B cell (primary cell): ENCODE measurements at regions of chr5 and their contacts with region 1.

Region 1: GRCh38 chr5:139690064-139690802 is 42.1 kb downstream of the CXXC5 start:
- DNase-seq: peak; percentile 71
- ATAC-seq: peak; percentile 51
- H3K4me3 ChIP-seq: peak overlapping the region in 2 of 5 experiments; percentile 8 to 9
- H3K4me3 Mint-ChIP-seq: peak overlapping the region; percentile 41
- H3K27ac ChIP-seq: peak overlapping the region; percentile 28 to 47
- H3K27ac Mint-ChIP-seq: peak overlapping the region; percentile 78
- H3K4me1 ChIP-seq: peaks cover 47 to 56% of the 10 kb centered on the region in 2 donors
- H3K4me1 Mint-ChIP-seq: peaks cover 52% of the 10 kb centered on the region
- H3K27me3 ChIP-seq: no peaks in the 10 kb centered on the region
- H3K27me3 Mint-ChIP-seq: no peaks in the 10 kb centered on the region
- CTCF ChIP-seq: peak; percentile 70

Region 2: DNA sequence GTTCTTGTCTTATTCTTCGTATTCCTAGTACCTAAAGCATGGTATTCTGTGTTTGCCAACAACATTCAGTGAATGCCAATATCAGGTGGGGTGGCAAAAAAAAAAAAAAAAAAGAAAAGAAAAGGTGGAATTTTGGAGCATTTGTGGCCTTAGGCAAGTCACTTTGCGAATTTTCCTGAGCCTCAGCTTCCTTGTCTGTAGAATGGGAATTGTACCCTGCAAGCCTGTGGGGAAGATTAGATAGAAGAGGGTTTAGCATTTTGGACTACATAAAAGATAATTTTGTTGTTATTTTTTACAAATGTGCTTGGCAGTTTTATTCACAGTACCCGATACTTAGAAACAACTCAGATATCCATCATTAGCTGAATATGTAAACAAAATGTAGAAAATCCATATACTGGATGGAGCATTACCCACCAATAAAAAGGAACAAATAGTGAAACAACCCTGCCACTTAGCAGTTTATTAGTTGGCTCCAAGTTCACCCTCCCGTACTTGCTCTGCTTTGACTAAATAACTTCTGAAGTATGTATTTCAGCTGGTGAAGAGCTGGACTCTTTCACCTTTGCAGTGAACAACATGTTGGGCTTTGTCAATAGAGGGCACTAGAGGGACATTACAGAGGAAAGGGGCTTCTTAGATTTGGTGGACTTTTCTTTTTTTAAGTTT is 115.5 kb before region 1 on chr5:
- CTCF ChIA-PET with region 1: interaction called, 10 read pairs
- POLR2A ChIA-PET with region 1: no interaction called
- intact Hi-C with region 1: no loop called
- DNase-seq: peak; percentile 63
- ATAC-seq: peak; percentile 67
- H3K4me3 ChIP-seq: no peak overlapping the region
- H3K4me3 Mint-ChIP-seq: peak overlapping the region; percentile 2
- H3K27ac ChIP-seq: peak overlapping the region in 1 of 2 donors; percentile 66
- H3K27ac Mint-ChIP-seq: peak overlapping the region; percentile 5
- H3K4me1 ChIP-seq: peaks cover 71 to 76% of the 10 kb centered on the region in 2 donors
- H3K4me1 Mint-ChIP-seq: peaks cover 74% of the 10 kb centered on the region
- H3K27me3 ChIP-seq: no peaks in the 10 kb centered on the region
- H3K27me3 Mint-ChIP-seq: no peaks in the 10 kb centered on the region
- CTCF ChIP-seq: peak; percentile 79

Region 3: DNA sequence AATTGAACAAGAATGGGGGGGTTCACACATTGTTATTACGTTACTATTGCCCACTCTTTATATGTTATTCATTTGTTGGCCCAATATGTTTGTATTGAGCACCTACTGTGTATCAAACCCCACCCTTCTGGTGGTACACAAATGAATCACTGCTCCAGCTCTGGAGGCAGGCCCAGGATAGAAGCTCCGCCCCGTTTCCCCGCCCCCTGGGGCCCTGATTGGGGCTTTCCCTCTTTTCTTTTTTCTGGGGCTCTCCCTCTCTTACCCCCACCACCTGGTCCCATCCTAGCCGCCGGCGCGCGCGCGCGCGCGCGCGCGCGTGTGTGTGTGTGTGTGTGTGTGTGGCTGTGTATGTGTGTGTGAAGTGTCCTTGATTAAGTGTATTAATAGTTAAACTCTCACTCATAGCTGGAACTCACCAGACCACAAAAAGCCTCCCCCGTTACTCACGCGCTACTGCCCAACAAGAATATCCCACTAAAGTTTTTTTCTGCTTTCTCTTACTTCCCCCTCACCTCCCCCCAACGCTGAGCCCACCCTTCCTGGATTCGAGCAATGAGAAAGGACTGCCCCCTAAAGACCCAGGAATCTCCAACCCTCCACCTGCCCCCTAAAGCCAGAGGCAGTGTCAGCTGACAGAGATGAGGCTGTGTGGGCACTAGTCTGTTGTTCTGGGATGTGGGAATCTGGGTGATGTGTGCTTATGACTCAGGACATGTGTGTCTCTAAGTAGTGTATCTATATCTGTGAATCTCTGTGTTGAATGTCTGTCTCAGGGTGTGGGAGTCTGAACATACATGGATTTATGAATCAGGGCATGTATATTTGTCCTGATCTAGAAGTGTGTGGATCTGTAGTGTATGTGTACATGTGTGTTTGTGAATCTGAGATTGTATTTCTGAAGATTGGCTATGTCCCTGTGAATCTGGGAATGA is 38.1 kb before region 1 on chr5:
- CTCF ChIA-PET with region 1: interaction called, 41 read pairs
- POLR2A ChIA-PET with region 1: interaction called, 21 read pairs
- intact Hi-C with region 1: no loop called
- DNase-seq: peak; percentile 92
- ATAC-seq: peak; percentile 50
- H3K4me3 ChIP-seq: peak overlapping the region; percentile 50 to 98 (median 95)
- H3K4me3 Mint-ChIP-seq: peak overlapping the region; percentile 88
- H3K27ac ChIP-seq: peak overlapping the region; percentile 71 to 90
- H3K27ac Mint-ChIP-seq: peak overlapping the region; percentile 94
- H3K4me1 ChIP-seq: peaks cover 68 to 74% of the 10 kb centered on the region in 2 donors
- H3K4me1 Mint-ChIP-seq: peaks cover 71% of the 10 kb centered on the region
- H3K27me3 ChIP-seq: no peaks in the 10 kb centered on the region
- H3K27me3 Mint-ChIP-seq: no peaks in the 10 kb centered on the region
- CTCF ChIP-seq: no peak

Region 4: DNA sequence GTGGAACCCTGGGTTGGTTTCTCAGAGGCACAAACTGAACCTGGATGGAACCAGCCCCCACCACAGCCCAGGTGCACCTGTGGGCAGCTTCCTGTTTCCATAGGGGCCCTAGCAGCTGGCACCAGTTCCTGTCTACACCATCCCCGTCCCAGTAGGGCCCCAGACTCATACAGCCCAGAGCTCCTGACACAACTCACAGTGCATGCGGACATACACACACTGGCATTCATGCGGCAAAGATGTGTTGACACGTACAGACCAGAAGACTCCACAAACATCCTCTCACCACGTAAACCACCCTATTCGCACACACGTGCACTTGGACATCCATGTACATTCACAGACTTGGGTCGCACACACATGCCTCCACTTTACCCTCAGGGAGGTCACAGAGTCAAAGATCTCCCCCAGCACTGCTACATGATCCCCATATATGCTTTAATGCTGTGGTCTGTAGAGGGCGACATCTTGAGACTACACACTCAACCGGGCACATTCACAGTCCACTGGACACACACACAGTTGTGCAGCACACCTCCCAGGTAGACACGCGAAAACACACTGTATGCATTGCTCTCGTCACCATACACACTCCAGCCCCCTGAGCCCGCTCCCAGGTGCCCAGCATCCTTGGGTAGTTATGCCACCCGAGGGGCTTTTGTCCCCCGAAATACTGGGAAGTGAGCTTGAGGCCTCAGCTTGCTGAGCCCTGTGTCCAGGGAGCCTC is 19.7 kb before region 1 on chr5:
- CTCF ChIA-PET with region 1: interaction called, 38 read pairs
- POLR2A ChIA-PET with region 1: interaction called, 32 read pairs
- intact Hi-C with region 1: loop called (anchors 1 kb)
- DNase-seq: peak; percentile 89
- ATAC-seq: peak; percentile 69
- H3K4me3 ChIP-seq: peak overlapping the region in 4 of 5 experiments; percentile 40 to 71 (median 52)
- H3K4me3 Mint-ChIP-seq: peak overlapping the region; percentile 86
- H3K27ac ChIP-seq: peak overlapping the region; percentile 89 to 90
- H3K27ac Mint-ChIP-seq: peak overlapping the region; percentile 95
- H3K4me1 ChIP-seq: peaks cover 88 to 98% of the 10 kb centered on the region in 2 donors
- H3K4me1 Mint-ChIP-seq: peaks cover 88% of the 10 kb centered on the region
- H3K27me3 ChIP-seq: no peaks in the 10 kb centered on the region
- H3K27me3 Mint-ChIP-seq: no peaks in the 10 kb centered on the region
- CTCF ChIP-seq: peak; percentile 47

Region 5: GRCh38 chr5:139740138-139740991 is 50.1 kb after region 1 on chr5:
- CTCF ChIA-PET with region 1: interaction called, 10 read pairs
- POLR2A ChIA-PET with region 1: interaction called, 6 read pairs
- intact Hi-C with region 1: loop called (anchors 10 kb)
- DNase-seq: peak; percentile 65
- ATAC-seq: peak; percentile 32
- H3K4me3 ChIP-seq: peak overlapping the region in 3 of 5 experiments; percentile 1 to 48 (median 18)
- H3K4me3 Mint-ChIP-seq: peak overlapping the region; percentile 62
- H3K27ac ChIP-seq: peak overlapping the region in 1 of 2 donors; percentile 17
- H3K27ac Mint-ChIP-seq: peak overlapping the region; percentile 88
- H3K4me1 ChIP-seq: peaks cover 27 to 44% of the 10 kb centered on the region in 2 donors
- H3K4me1 Mint-ChIP-seq: peaks cover 59% of the 10 kb centered on the region
- H3K27me3 ChIP-seq: no peaks in the 10 kb centered on the region
- H3K27me3 Mint-ChIP-seq: no peaks in the 10 kb centered on the region
- CTCF ChIP-seq: no peak